Endothelial cell of umbilical vein (primary cell): ENCODE measurements at regions of chr5 and their contacts with region 1.

Region 1: GRCh38 chr5:9207817-9208418 is 338.0 kb downstream of the SEMA5A start:
- DNase-seq: peak; percentile 45
- H3K4me3 ChIP-seq: no peak overlapping the region
- H3K27ac ChIP-seq: no peak overlapping the region
- H3K4me1 ChIP-seq: no peaks in the 10 kb centered on the region
- H3K27me3 ChIP-seq: no peaks in the 10 kb centered on the region
- CTCF ChIP-seq: peak in 1 of 2 donors; percentile 8
- POLR2A ChIP-seq: no peak

Region 2: GRCh38 chr5:7886849-7887475 is 1321.0 kb before region 1 on chr5:
- CTCF ChIA-PET with region 1: interaction called, 8 read pairs
- POLR2A ChIA-PET with region 1: no interaction called
- dilution Hi-C with region 1: no loop called
- intact Hi-C with region 1: loop called (anchors 2 kb)
- DNase-seq: peak; percentile 44
- H3K4me3 ChIP-seq: no peak overlapping the region
- H3K27ac ChIP-seq: no peak overlapping the region
- H3K4me1 ChIP-seq: no peaks in the 10 kb centered on the region
- H3K27me3 ChIP-seq: no peaks in the 10 kb centered on the region
- CTCF ChIP-seq: peak; percentile 21 to 28
- POLR2A ChIP-seq: no peak

Region 3: GRCh38 chr5:7927466-7928375 is 1280.2 kb before region 1 on chr5:
- CTCF ChIA-PET with region 1: interaction called, 14 read pairs
- POLR2A ChIA-PET with region 1: no interaction called
- dilution Hi-C with region 1: no loop called
- intact Hi-C with region 1: loop called (anchors 1 kb)
- DNase-seq: peak; percentile 36
- H3K4me3 ChIP-seq: no peak overlapping the region
- H3K27ac ChIP-seq: no peak overlapping the region
- H3K4me1 ChIP-seq: no peaks in the 10 kb centered on the region
- H3K27me3 ChIP-seq: no peaks in the 10 kb centered on the region
- CTCF ChIP-seq: peak; percentile 64 to 70
- POLR2A ChIP-seq: no peak

Region 4: GRCh38 chr5:8550921-8551320 is 657.0 kb before region 1 on chr5:
- CTCF ChIA-PET with region 1: no interaction called
- POLR2A ChIA-PET with region 1: no interaction called
- dilution Hi-C with region 1: no loop called
- intact Hi-C with region 1: no loop called
- DNase-seq: no peak
- H3K4me3 ChIP-seq: no peak overlapping the region
- H3K27ac ChIP-seq: no peak overlapping the region
- H3K4me1 ChIP-seq: no peaks in the 10 kb centered on the region
- H3K27me3 ChIP-seq: no peaks in the 10 kb centered on the region
- CTCF ChIP-seq: no peak
- POLR2A ChIP-seq: no peak

Region 5: DNA sequence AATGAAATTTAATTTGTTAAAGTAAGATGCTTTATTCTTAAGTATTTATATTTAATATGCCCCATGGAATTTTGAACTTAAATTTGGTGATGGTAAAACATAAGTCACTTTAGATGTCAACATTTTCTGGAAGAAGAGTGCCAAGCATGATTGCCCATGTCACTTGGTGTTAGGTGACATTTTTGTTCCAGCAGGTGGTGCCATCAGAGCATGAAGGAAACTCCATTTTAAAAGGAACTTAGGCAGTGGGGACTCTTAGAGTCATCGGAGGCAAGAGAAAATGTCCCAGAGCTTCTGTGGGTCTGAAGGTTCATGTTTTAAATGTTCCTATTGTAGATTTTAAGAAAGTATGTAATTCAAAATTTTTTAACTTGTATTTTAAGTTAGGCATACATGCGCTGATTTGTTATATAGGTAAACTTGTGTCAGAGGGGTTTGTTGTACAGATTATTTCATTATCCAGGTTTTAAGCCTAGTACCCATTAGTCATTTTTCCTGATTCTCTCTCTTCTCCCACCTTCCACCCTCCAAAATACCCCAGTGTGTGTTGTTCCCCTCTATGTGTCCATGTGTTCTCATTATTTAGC is 451.3 kb before region 1 on chr5:
- CTCF ChIA-PET with region 1: interaction called, 17 read pairs
- POLR2A ChIA-PET with region 1: no interaction called
- dilution Hi-C with region 1: no loop called
- intact Hi-C with region 1: no loop called
- DNase-seq: peak; percentile 29
- H3K4me3 ChIP-seq: no peak overlapping the region
- H3K27ac ChIP-seq: no peak overlapping the region
- H3K4me1 ChIP-seq: no peaks in the 10 kb centered on the region
- H3K27me3 ChIP-seq: no peaks in the 10 kb centered on the region
- CTCF ChIP-seq: peak; percentile 4 to 22
- POLR2A ChIP-seq: no peak

Region 6: DNA sequence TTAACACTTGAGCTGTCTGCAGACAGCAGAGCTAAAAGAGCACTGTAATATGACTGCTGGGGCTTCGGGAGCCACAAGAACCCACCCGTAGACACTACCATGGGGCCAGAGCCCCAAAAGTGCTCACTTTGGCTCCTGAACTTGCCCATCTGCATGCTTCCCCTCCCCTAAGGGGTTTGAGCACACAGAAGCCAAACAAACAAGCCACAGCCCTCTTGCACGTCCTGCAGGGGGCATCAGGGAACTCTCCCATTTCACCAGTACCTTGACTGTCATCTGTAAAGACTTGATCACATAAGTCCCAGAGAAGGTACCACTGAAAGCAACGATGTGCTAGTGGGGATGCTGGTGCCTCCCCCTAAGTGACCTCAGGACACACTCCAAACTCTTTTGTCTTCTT is 343.9 kb before region 1 on chr5:
- CTCF ChIA-PET with region 1: interaction called, 5 read pairs
- POLR2A ChIA-PET with region 1: no interaction called
- dilution Hi-C with region 1: no loop called
- intact Hi-C with region 1: loop called (anchors 10 kb)
- DNase-seq: peak; percentile 13
- H3K4me3 ChIP-seq: no peak overlapping the region
- H3K27ac ChIP-seq: no peak overlapping the region
- H3K4me1 ChIP-seq: no peaks in the 10 kb centered on the region
- H3K27me3 ChIP-seq: no peaks in the 10 kb centered on the region
- CTCF ChIP-seq: peak in 1 of 2 donors; percentile 34
- POLR2A ChIP-seq: no peak

Region 7: GRCh38 chr5:9251379-9251980 is 43.6 kb after region 1 on chr5:
- CTCF ChIA-PET with region 1: no interaction called
- POLR2A ChIA-PET with region 1: no interaction called
- dilution Hi-C with region 1: no loop called
- intact Hi-C with region 1: no loop called
- DNase-seq: no peak
- H3K4me3 ChIP-seq: no peak overlapping the region
- H3K27ac ChIP-seq: no peak overlapping the region
- H3K4me1 ChIP-seq: no peaks in the 10 kb centered on the region
- H3K27me3 ChIP-seq: no peaks in the 10 kb centered on the region
- CTCF ChIP-seq: no peak
- POLR2A ChIP-seq: no peak